Psoas muscle (tissue), 8 donors: ENCODE measurements at regions of chr17 and their contacts with region 1.

Region 1: DNA sequence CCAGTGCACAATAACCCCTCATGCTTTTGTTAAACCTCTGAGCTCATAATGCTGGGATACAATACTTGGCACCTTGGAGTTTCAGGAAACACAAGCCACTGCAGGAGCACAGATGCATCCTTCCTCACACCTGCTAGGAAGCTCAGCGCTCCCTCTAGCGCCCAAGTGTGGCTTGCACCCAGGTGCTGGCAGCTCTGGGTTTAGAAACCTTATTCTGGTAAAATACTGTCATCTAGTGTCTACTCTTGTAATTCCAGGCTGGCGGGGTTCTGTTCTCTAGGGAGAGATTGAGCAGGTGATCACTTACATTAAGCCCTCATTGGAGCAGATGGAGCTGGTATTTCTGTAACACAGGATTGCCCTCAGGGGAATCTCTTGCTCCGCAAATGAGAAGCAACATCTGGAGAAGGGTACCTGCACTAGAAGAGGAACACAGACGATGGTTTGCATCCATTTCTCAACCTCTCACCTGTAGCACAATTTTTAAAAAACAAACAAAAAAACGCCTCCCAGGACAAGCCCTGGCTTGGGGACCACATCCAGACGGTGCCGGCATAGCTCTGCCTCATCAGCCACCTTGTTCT is 1.5 kb downstream of the CCL1 start:
- DNase-seq: peak; percentile 86 to 90
- ATAC-seq: peak; percentile 76 to 92 (median 86)
- H3K4me3 ChIP-seq: no peak overlapping the region
- H3K27ac ChIP-seq: no peak overlapping the region
- H3K4me1 ChIP-seq: no peaks in the 10 kb centered on the region
- H3K27me3 ChIP-seq: peaks cover 0 to 16% (median 0%) of the 10 kb centered on the region in 3 donors
- CTCF ChIP-seq: peak; percentile 94

Region 2: GRCh38 chr17:33779225-33779591 is 582.4 kb before region 1 on chr17:
- intact Hi-C with region 1: loop called in 1 of 2 experiments (anchors 5 kb)
- DNase-seq: peak in 1 of 2 donors; percentile 21
- ATAC-seq: peak in 1 of 4 donors; percentile 54
- H3K4me3 ChIP-seq: no peak overlapping the region
- H3K27ac ChIP-seq: no peak overlapping the region
- H3K4me1 ChIP-seq: no peaks in the 10 kb centered on the region
- H3K27me3 ChIP-seq: peaks cover 0 to 3% (median 0%) of the 10 kb centered on the region in 3 donors
- CTCF ChIP-seq: peak; percentile 88

Region 3: GRCh38 chr17:34199932-34200534 is 161.5 kb before region 1 on chr17:
- intact Hi-C with region 1: loop called (anchors 1 to 2 kb)
- DNase-seq: peak; percentile 51 to 58
- ATAC-seq: peak; percentile 76 to 90 (median 88)
- H3K4me3 ChIP-seq: no peak overlapping the region
- H3K27ac ChIP-seq: no peak overlapping the region
- H3K4me1 ChIP-seq: no peaks in the 10 kb centered on the region
- H3K27me3 ChIP-seq: peaks cover 0 to 3% (median 2%) of the 10 kb centered on the region in 3 donors
- CTCF ChIP-seq: peak; percentile 99

Region 4: DNA sequence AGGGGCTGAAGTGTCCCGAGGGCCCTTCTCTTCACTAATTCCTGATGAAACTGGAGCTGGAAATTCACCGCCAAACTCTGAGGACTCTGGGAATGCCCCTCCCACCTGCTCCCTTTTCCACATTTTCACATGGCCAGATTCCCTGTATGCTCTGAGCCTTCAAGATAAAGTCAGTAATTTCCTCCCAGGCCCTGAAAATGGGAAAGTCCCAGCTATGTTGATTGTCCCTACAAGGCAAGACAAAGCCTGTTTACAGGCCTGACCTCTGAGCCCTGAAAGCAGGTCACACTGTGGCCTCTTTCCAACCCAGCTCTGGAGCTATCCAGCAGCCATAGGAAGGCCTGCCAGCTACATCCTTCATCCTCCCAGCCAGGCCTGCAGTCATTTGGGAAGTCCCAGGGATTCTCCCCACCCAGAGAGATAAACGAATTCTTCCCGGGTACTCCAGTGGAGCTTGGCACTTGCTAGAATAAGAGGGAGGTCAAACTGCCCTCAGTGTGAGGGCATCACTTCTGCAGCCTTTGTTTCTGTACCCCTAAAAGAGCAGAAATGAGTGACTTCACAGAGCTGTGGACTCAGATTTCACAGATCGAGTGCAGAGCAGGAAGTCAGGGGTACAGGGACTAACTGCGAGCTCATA is 126.1 kb before region 1 on chr17:
- intact Hi-C with region 1: no loop called
- DNase-seq: peak; percentile 49 to 75
- ATAC-seq: peak; percentile 37 to 79 (median 68)
- H3K4me3 ChIP-seq: no peak overlapping the region
- H3K27ac ChIP-seq: peak overlapping the region; percentile 54
- H3K4me1 ChIP-seq: peaks cover 17% of the 10 kb centered on the region
- H3K27me3 ChIP-seq: no peaks in the 10 kb centered on the region
- CTCF ChIP-seq: no peak

Region 5: GRCh38 chr17:34318474-34318873 is 43.1 kb before region 1 on chr17:
- intact Hi-C with region 1: loop called in 1 of 2 experiments (anchors 5 kb)
- DNase-seq: no peak
- ATAC-seq: no peak
- H3K4me3 ChIP-seq: no peak overlapping the region
- H3K27ac ChIP-seq: no peak overlapping the region
- H3K4me1 ChIP-seq: no peaks in the 10 kb centered on the region
- H3K27me3 ChIP-seq: no peaks in the 10 kb centered on the region
- CTCF ChIP-seq: no peak

Region 6: DNA sequence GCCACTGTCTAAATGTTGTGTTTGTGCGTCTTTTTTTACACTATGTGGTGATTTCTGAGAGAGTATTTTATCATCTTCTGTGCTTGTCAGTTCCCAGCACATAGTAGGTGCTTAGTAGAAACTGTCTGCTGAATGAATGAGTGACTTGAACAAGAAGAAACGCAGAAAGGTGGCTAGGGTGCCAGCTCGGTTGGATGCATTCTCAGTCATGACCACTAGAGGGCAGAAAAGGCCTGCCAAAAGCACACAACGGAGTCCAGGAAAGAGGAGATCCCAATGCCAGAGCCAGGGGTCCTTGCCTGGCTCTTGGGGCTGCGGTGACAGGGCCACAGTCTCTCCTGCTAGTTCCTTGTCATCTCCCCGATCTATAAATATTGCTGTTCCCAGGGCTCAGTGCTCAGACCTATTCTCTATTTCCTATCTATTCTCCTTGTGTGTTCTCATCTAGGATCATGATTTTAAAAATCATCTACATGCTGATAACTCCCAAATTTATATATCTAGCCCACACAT is 58.7 kb after region 1 on chr17:
- intact Hi-C with region 1: no loop called
- DNase-seq: peak in 1 of 2 donors; percentile 24
- ATAC-seq: peak in 3 of 4 donors; percentile 61 to 76 (median 70)
- H3K4me3 ChIP-seq: no peak overlapping the region
- H3K27ac ChIP-seq: no peak overlapping the region
- H3K4me1 ChIP-seq: no peaks in the 10 kb centered on the region
- H3K27me3 ChIP-seq: peaks cover 3 to 31% (median 7%) of the 10 kb centered on the region in 3 donors
- CTCF ChIP-seq: peak; percentile 99

Region 7: DNA sequence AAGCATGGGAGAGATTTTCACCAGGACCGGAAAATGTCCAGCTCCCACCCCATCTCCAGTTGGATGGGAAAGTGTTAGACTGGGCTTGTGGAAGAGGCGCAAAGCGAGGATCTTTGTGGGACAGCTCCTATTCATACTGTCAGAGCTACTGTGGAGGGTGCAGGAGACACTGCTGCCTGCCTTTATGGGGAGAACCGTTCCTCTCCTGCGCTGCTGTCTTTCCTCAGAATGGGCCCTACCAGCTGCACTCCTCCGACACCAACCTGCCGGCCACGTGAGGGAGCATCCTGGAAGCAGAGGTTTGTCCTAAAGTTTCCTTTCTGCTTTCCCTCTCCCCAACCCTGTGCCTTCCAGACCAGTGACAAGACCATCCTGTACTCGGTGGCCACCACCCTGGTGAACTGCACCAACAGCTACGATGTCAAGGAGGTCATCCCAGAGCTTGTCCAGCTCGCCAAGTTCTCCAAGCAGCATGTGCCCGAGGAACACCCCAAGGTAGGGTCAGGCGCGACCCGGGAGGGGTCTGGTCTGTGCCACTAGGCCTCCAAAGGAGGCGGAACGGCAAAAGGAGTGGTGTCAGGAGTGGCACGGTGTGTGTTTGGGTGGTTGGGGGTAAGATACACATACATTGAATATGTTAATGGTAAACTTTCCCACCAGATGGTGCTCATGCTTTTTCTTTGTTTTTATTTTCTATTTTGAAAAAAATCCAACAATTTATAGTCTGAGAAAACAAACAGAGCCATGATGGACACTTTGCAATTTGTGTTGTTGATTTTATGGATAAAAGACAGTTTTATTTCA is 809.6 kb after region 1 on chr17:
- intact Hi-C with region 1: no loop called
- DNase-seq: no peak
- ATAC-seq: peak in 1 of 4 donors; percentile 33
- H3K4me3 ChIP-seq: no peak overlapping the region
- H3K27ac ChIP-seq: no peak overlapping the region
- H3K4me1 ChIP-seq: no peaks in the 10 kb centered on the region
- H3K27me3 ChIP-seq: no peaks in the 10 kb centered on the region
- CTCF ChIP-seq: no peak